ENCODE measurements at regions of chr22 and their contacts with region 1.

Region 1: DNA sequence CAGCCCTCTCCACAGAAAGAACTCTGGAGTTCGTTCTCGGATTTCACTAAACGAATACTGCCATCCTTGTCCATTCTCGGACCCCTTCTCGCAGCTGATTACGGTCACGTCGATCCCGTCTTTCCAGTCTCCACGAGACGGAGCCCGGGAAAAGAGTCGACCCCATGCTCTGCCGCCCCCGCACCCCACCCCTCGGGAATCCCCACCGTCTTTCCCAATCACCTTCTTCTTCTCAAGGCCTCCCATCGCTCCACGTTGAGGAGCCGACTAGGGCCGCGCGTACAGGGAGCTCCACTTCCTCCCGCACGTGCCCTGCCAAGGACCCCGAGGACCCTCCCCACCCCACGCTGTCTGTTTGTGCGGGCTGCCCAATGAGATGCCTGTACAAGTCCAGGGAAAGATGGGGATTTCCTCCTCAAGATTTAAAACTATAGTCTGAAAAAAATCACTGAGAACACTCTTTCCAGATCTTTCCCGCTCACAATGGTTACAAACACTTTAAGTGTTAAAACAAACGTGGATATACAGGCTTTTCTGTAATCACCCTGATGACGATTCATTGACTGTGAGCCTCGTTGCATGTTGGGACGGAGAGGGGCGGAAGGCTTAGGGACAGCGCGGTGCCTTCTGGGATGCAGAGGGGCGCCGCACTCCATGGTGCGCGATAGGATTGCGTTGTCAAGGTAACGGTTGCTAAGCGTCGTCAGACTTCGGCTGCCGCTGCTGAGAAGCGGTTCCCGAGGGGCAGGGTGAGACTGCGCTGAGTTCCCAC is at the start of gene PES1:
- DNase-seq: peak; percentile 89 to 97 (median 92)
- ATAC-seq: peak; percentile 99
- H3K4me3 ChIP-seq: peak within 1 kb of the TSS; percentile 61
- H3K27ac ChIP-seq: peak within 1 kb of the TSS; percentile 93
- H3K4me1 ChIP-seq: peaks cover 0 to 6% of the 10 kb centered on the region in 2 experiments; a peak in 2 of 5 replicates
- H3K27me3 ChIP-seq: no peaks in the 10 kb centered on the region
- CTCF ChIP-seq: no peak
- EP300 ChIP-seq: no peak
- POLR2A ChIP-seq: peak; percentile 66; the same call in 1 of the 2 replicates
- RAD21 ChIP-seq: no peak
- polyA plus RNA-seq, gene PES1: 6.5 to 8.2 TPM

Region 2: GRCh38 chr22:30574997-30575671 is 16.6 kb before region 1 on chr22:
- CTCF ChIA-PET with region 1: no interaction called
- POLR2A ChIA-PET with region 1: interaction called, 11 read pairs
- in situ Hi-C with region 1: no loop called
- intact Hi-C with region 1: no loop called
- DNase-seq: no peak
- ATAC-seq: no peak; the same call in 2 of the 3 replicates
- H3K4me3 ChIP-seq: no peak overlapping the region
- H3K27ac ChIP-seq: no peak overlapping the region
- H3K4me1 ChIP-seq: peaks cover 0 to 12% of the 10 kb centered on the region in 2 experiments; a peak in 2 of 5 replicates
- H3K27me3 ChIP-seq: peaks cover 0 to 5% of the 10 kb centered on the region in 2 experiments; a peak in 3 of 5 replicates
- CTCF ChIP-seq: 0 out of 6 replicates have a peak, but pooled peaks of 1 of the 3 experiments have one; percentile 5
- EP300 ChIP-seq: no peak
- POLR2A ChIP-seq: peak; percentile 50; the same call in 1 of the 2 replicates
- RAD21 ChIP-seq: no peak

Region 3: DNA sequence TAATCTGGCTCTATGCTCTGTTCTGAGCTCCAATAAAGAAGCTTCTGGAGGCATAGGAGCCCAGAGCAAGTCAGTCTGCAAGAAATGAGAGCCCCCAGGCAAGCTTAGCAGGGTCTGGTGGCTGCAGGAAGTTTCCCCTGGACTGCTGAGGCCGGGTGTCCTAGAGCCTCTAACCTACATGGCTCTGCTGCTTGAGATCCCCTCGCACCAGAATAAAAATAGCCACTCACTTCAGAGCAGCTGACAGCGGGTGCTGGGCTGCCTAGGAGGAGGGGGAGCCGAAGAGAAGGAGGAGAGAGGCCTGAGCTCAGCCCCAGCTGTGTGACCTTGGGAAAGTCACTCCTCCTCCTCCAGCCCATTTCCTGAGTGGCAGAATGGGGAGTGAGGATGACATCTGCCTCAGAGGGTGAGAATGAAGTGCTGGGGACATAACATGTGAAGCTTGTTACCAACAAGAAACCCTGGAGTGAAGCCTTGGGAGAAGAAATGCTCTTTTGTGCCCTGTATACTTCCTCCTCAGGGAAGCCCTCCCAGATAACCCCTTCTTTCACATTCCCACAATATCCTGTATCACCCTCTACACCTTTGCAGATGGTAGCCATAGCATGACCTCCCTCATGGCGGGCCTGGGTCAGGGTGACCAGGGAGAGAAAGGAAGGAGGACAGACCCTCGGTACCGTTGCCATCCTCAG is 527.4 kb after region 1 on chr22:
- CTCF ChIA-PET with region 1: no interaction called
- POLR2A ChIA-PET with region 1: no interaction called
- in situ Hi-C with region 1: no loop called
- intact Hi-C with region 1: no loop called
- DNase-seq: peak in 1 of 4 experiments; percentile 32
- ATAC-seq: peak; percentile 41
- H3K4me3 ChIP-seq: no peak overlapping the region
- H3K27ac ChIP-seq: no peak overlapping the region
- H3K4me1 ChIP-seq: peaks cover 26 to 32% of the 10 kb centered on the region in 2 experiments
- H3K27me3 ChIP-seq: no peaks in the 10 kb centered on the region
- CTCF ChIP-seq: no peak
- EP300 ChIP-seq: no peak
- POLR2A ChIP-seq: no peak
- RAD21 ChIP-seq: no peak